ENCODE measurements at regions of chr5 and their contacts with region 1.

Region 1: GRCh38 chr5:96752341-96753016 is 55.3 kb downstream of the ERAP1 start:
- DNase-seq: no peak
- ATAC-seq: peak; percentile 34 to 39
- H3K4me3 ChIP-seq: no peak overlapping the region
- H3K27ac ChIP-seq: no peak overlapping the region
- H3K4me1 ChIP-seq: no peaks in the 10 kb centered on the region
- H3K27me3 ChIP-seq: no peaks in the 10 kb centered on the region
- CTCF ChIP-seq: peak; percentile 75

Region 2: GRCh38 chr5:96876292-96876850 is 123.9 kb after region 1 on chr5 and contains the start of gene ERAP2:
- intact Hi-C with region 1: loop called (anchors 10 kb)
- DNase-seq: no peak
- ATAC-seq: peak; percentile 64 to 86
- H3K4me3 ChIP-seq: peak within 1 kb of the TSS; percentile 70
- H3K27ac ChIP-seq: peak within 1 kb of the TSS; percentile 87
- H3K4me1 ChIP-seq: peaks cover 37% of the 10 kb centered on the region
- H3K27me3 ChIP-seq: no peaks in the 10 kb centered on the region
- CTCF ChIP-seq: no peak
- total RNA-seq, gene ERAP2: 32.1 TPM

Measured in lower lobe of right lung (tissue), 2 donors.